ENCODE measurements at regions of chr20 and their contacts with region 1.

Region 1: GRCh38 chr20:2713285-2713684 is 20.7 kb downstream of the EBF4 start:
- DNase-seq: no peak
- H3K4me3 Mint-ChIP-seq: no peak overlapping the region
- H3K27ac Mint-ChIP-seq: no peak overlapping the region
- H3K4me1 Mint-ChIP-seq: no peaks in the 10 kb centered on the region
- H3K27me3 Mint-ChIP-seq: no peaks in the 10 kb centered on the region

Region 2: DNA sequence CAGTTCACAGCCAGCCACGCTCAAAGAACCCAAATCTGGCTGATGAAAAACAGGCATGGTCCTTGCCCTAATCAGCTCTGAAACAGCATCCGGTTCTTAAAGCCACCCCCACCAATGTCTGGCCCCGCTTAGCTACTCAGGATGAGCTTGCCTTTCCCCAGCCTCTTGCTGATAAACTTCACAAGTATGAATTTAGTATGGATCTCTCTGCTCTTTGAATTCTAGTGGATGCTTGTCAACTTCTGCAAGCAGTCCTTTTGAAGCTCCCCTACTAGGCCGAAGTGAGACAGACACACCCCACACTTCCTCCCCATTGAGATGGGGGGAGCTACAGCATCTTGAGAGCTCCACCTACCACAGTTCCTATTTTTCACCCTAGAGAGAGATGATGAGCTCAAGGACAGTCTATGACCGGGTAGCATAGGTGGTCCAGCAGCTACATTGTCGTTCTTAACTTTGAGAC is 16.0 kb after region 1 on chr20:
- CTCF ChIA-PET with region 1: interaction called, 23 read pairs
- intact Hi-C with region 1: no loop called
- DNase-seq: peak; percentile 61
- H3K4me3 Mint-ChIP-seq: peak overlapping the region; percentile 44
- H3K27ac Mint-ChIP-seq: peak overlapping the region; percentile 68
- H3K4me1 Mint-ChIP-seq: peaks cover 21% of the 10 kb centered on the region
- H3K27me3 Mint-ChIP-seq: no peaks in the 10 kb centered on the region

Region 3: DNA sequence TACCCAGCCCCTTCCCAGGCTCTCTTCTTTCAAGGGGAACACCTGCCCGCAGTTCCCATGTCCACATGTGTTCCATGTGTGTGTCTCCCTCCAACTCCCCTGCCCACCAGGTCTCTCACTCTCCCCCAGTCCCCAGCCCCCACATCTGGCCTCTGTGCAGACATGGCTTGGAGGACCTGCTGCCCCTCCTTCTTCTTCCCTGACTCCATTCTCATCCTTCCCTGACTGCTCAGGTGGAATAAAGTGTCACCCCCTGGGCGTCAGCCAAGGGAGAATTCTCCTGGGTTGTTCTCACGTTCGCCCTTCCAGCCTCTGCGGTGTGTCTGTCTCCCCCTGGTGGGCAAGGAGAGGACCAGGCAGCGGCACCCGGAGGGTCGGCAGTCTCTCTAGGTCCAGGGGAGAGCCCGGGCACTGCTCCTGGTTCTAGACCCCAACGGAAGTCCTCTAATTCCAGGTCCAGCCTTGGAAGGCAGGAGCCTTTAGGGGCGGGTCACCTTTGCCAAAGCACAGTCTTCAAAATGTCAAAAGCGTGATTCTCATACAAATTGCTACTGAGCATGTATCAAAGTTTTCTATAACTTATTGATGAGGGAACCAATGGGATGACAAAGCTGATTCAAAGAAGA is 29.8 kb after region 1 on chr20:
- CTCF ChIA-PET with region 1: interaction called, 33 read pairs
- intact Hi-C with region 1: loop called (anchors 1 kb)
- DNase-seq: peak; percentile 81
- H3K4me3 Mint-ChIP-seq: no peak overlapping the region
- H3K27ac Mint-ChIP-seq: no peak overlapping the region
- H3K4me1 Mint-ChIP-seq: peaks cover 42% of the 10 kb centered on the region
- H3K27me3 Mint-ChIP-seq: no peaks in the 10 kb centered on the region

Region 4: DNA sequence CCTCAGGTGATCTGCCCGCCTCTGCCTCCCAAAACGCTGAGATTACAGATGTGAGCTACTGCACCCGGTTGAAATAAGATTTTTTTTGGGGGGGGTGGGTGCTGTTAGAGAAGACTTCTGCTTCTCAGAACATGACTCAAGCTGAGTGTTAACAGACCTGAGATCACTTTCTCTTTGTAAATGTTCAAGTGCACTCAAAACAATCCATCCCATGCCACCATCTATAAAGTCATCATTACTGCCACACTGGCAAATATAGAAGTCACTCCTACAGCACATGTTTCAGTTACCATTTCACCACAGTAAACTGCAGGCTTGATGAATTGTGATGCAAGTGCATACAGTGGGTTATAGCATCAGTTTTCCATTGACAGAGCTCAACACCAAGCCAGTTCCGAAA is 136.2 kb after region 1 on chr20:
- CTCF ChIA-PET with region 1: interaction called, 4 read pairs
- intact Hi-C with region 1: loop called (anchors 1 kb)
- DNase-seq: no peak
- H3K4me3 Mint-ChIP-seq: no peak overlapping the region
- H3K27ac Mint-ChIP-seq: peak overlapping the region; percentile 18
- H3K4me1 Mint-ChIP-seq: peaks cover 27% of the 10 kb centered on the region
- H3K27me3 Mint-ChIP-seq: no peaks in the 10 kb centered on the region

Region 5: GRCh38 chr20:3000852-3001523 is 287.7 kb after region 1 on chr20:
- CTCF ChIA-PET with region 1: interaction called, 3 read pairs
- intact Hi-C with region 1: loop called (anchors 1 kb)
- DNase-seq: peak; percentile 18
- H3K4me3 Mint-ChIP-seq: no peak overlapping the region
- H3K27ac Mint-ChIP-seq: no peak overlapping the region
- H3K4me1 Mint-ChIP-seq: no peaks in the 10 kb centered on the region
- H3K27me3 Mint-ChIP-seq: no peaks in the 10 kb centered on the region

Region 6: GRCh38 chr20:3101737-3102574 is 388.7 kb after region 1 on chr20:
- CTCF ChIA-PET with region 1: no interaction called
- intact Hi-C with region 1: no loop called
- DNase-seq: peak; percentile 86
- H3K4me3 Mint-ChIP-seq: no peak overlapping the region
- H3K27ac Mint-ChIP-seq: no peak overlapping the region
- H3K4me1 Mint-ChIP-seq: peaks cover 23% of the 10 kb centered on the region
- H3K27me3 Mint-ChIP-seq: no peaks in the 10 kb centered on the region

Measured in activated naive CD4-positive, alpha-beta T cell treated with anti-CD3 and anti-CD28 coated beads for 36 hours (primary cell).